B cell (primary cell): ENCODE measurements at regions of chr4 and their contacts with region 1.

Region 1: DNA sequence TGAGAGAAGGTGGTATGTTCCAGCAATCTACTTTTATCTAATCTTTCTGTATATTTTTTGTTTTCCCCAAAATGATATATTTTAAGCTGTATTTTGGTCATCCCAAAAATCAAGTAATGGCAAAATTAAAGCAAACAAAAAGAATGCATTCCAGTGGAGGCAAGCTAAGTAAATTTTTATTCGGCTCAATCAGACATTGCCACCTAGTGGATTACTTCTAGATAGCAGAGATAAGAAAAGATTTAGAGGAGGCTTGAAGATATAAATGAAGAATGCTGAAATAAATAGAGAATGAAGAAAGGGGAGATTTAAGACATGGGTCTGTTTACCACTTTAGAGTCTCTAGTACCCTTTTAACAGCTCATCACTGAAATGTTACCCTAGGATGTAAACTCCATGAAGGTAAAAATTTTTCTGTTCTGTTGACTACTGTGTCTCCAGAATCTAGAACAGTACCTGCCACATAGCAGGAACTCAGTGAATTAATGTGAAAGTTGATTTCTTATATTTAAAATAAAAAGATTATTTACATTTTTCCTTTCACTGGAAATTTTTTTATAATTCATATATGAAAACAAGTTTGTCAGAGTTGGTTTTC is 110.9 kb upstream of the ANK2 start:
- DNase-seq: peak; percentile 18
- ATAC-seq: no peak
- H3K4me3 ChIP-seq: no peak overlapping the region
- H3K4me3 Mint-ChIP-seq: no peak overlapping the region
- H3K27ac ChIP-seq: no peak overlapping the region
- H3K27ac Mint-ChIP-seq: no peak overlapping the region
- H3K4me1 ChIP-seq: no peaks in the 10 kb centered on the region
- H3K4me1 Mint-ChIP-seq: no peaks in the 10 kb centered on the region
- H3K27me3 ChIP-seq: no peaks in the 10 kb centered on the region
- H3K27me3 Mint-ChIP-seq: peaks cover 2% of the 10 kb centered on the region
- CTCF ChIP-seq: peak; percentile 83

Region 2: GRCh38 chr4:112636688-112637551 is 301.6 kb before region 1 on chr4 and contains the starts of genes LARP7 and ZGRF1:
- CTCF ChIA-PET with region 1: interaction called, 9 read pairs
- POLR2A ChIA-PET with region 1: no interaction called
- intact Hi-C with region 1: loop called (anchors 1 kb)
- DNase-seq: peak; percentile 99
- ATAC-seq: peak; percentile 86
- H3K4me3 ChIP-seq: peak within 1 kb of the TSS; percentile 54 to 94 (median 74)
- H3K4me3 Mint-ChIP-seq: no peak within 1 kb of the TSS
- H3K27ac ChIP-seq: peak within 1 kb of the TSS; percentile 84 to 97
- H3K27ac Mint-ChIP-seq: no peak within 1 kb of the TSS
- H3K4me1 ChIP-seq: peaks cover 13 to 19% of the 10 kb centered on the region in 2 donors
- H3K4me1 Mint-ChIP-seq: peaks cover 22% of the 10 kb centered on the region
- H3K27me3 ChIP-seq: no peaks in the 10 kb centered on the region
- H3K27me3 Mint-ChIP-seq: no peaks in the 10 kb centered on the region
- CTCF ChIP-seq: peak; percentile 92
- total RNA-seq, gene LARP7: 57.4 and 62.2 TPM in 2 replicates
- total RNA-seq, gene ZGRF1: 13.0 and 18.6 TPM in 2 replicates

Region 3: DNA sequence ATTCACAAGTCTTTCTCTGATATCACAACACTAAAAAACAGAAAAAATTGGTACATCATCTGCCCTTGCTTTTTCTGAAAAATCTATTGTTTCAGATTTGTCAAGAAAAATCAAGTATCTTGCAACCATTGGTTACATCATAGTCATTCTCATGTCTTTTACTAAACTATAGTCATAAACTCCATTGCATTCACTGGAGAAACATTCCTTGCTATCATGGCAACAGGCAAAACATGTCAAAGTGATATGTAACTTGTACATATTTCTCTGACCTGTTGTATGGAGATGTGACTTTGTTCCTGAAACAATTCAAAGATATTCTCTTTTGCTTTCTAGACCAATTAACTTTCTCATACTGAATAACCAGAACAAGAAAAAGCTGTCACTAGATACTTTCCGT is 11.0 kb before region 1 on chr4:
- CTCF ChIA-PET with region 1: interaction called, 14 read pairs
- POLR2A ChIA-PET with region 1: no interaction called
- intact Hi-C with region 1: no loop called
- DNase-seq: no peak
- ATAC-seq: no peak
- H3K4me3 ChIP-seq: no peak overlapping the region
- H3K4me3 Mint-ChIP-seq: no peak overlapping the region
- H3K27ac ChIP-seq: no peak overlapping the region
- H3K27ac Mint-ChIP-seq: no peak overlapping the region
- H3K4me1 ChIP-seq: no peaks in the 10 kb centered on the region
- H3K4me1 Mint-ChIP-seq: no peaks in the 10 kb centered on the region
- H3K27me3 ChIP-seq: no peaks in the 10 kb centered on the region
- H3K27me3 Mint-ChIP-seq: peaks cover 2% of the 10 kb centered on the region
- CTCF ChIP-seq: no peak

Region 4: DNA sequence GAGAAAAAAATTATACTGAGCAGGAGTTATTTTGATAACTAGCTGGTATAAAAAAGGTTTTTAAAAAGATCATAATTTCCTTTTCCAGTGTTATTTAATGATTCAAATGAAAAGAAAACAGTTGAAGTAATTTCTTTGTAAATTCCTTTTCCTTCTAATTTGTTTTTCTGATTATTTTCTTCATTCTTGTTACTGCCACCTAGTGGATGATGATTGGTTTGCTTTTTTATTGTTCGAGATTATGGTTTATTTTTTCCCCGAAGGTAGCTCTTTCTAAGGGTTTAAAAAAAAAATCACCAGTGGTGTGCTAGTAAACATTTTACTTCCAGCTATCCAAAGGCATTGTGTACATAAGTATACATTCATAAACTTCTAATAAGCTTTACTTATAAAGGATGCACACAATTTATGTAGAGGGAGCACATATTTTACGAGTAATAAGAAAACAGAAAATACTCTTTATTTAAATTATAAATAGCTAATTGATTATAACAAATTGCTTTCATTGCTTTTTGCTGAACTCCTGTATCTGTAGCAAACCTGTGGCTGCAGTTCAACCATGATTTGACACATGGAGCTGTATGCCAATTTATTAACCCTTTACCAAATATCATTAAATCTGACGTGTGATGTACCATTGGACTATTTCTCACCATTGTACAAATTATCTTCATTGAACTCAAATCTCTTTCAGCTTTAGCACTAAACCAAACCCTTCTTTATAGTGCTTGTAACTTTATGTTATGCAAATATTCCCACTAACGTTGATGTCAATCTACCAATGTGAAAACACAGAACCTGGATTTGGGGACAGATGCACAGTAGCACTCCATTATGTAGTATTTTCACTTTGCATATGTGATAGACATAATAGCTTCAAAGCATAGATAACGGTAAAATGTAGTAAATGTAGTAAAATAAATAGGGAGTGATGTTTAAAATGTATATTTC is 13.1 kb after region 1 on chr4:
- CTCF ChIA-PET with region 1: interaction called, 37 read pairs
- POLR2A ChIA-PET with region 1: no interaction called
- intact Hi-C with region 1: no loop called
- DNase-seq: peak; percentile 11
- ATAC-seq: no peak
- H3K4me3 ChIP-seq: no peak overlapping the region
- H3K4me3 Mint-ChIP-seq: no peak overlapping the region
- H3K27ac ChIP-seq: no peak overlapping the region
- H3K27ac Mint-ChIP-seq: no peak overlapping the region
- H3K4me1 ChIP-seq: no peaks in the 10 kb centered on the region
- H3K4me1 Mint-ChIP-seq: peaks cover 2% of the 10 kb centered on the region
- H3K27me3 ChIP-seq: peaks cover 0 to 4% (median 0%) of the 10 kb centered on the region in 4 experiments
- H3K27me3 Mint-ChIP-seq: no peaks in the 10 kb centered on the region
- CTCF ChIP-seq: peak; percentile 84